ENCODE measurements at regions of chr1 and their contacts with region 1.

Region 1: DNA sequence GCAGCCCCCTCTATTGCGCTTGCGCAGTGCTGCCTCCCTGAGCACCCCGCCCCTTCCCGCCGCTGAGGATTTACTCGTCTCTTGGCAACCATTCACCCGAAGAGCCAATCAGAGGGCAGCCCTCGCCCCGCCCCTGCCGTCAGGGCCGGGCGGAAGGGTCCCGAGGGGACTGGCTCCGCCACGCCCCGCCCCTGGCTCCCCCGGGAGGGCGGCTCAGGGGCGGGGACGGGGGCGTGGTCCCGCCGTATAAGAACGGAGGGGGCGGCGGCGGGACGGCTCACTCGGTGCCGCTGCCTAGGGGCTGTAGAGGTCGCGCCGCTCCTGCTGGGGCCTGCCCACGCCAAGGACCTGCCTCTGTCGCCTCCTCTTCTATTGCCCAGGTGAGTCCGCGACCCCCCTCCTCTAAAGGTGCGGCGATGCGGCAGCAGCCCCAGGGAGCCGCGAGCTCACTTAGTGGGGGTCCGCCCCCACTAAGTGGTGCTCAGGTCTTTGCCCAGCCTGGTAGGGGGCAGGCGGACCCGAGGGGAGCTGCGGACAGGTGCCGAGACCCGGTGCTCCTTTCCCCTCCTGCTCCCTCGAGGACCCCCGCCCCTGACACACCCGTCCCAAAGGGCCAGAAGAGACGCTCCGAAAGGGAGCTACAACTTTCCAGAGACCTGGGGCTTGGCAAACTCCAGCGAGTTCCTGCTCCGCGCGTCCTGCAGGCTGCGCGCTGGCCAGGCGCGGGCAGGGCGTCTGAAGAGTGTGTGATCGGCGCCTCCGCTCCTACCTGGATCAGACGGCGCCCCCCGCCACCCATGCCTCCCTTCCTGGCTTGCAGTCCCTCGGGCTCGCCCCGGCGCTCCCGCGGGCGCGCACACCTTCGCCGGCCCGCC is at the start of gene TENT5C:
- DNase-seq: peak; percentile 98
- H3K4me3 Mint-ChIP-seq: peak within 1 kb of the TSS; percentile 97
- H3K27ac Mint-ChIP-seq: peak within 1 kb of the TSS; percentile 42
- H3K4me1 Mint-ChIP-seq: no peaks in the 10 kb centered on the region
- H3K27me3 Mint-ChIP-seq: peaks cover 36% of the 10 kb centered on the region
- CTCF ChIP-seq: no peak
- total RNA-seq, gene TENT5C: 0.05 TPM in 1 of 2 replicates, not detected in the other

Region 2: GRCh38 chr1:117654493-117655219 is 48.6 kb after region 1 on chr1:
- CTCF ChIA-PET with region 1: interaction called, 4 read pairs
- POLR2A ChIA-PET with region 1: interaction called, 10 read pairs
- intact Hi-C with region 1: no loop called
- DNase-seq: peak; percentile 55
- H3K4me3 Mint-ChIP-seq: no peak overlapping the region
- H3K27ac Mint-ChIP-seq: peak overlapping the region; percentile 74
- H3K4me1 Mint-ChIP-seq: peaks cover 23% of the 10 kb centered on the region
- H3K27me3 Mint-ChIP-seq: no peaks in the 10 kb centered on the region
- CTCF ChIP-seq: no peak

Region 3: GRCh38 chr1:117669572-117669971 is 63.6 kb after region 1 on chr1:
- CTCF ChIA-PET with region 1: no interaction called
- POLR2A ChIA-PET with region 1: no interaction called
- intact Hi-C with region 1: no loop called
- DNase-seq: no peak
- H3K4me3 Mint-ChIP-seq: no peak overlapping the region
- H3K27ac Mint-ChIP-seq: no peak overlapping the region
- H3K4me1 Mint-ChIP-seq: no peaks in the 10 kb centered on the region
- H3K27me3 Mint-ChIP-seq: no peaks in the 10 kb centered on the region
- CTCF ChIP-seq: no peak

Region 4: GRCh38 chr1:117753654-117754054 is 147.6 kb after region 1 on chr1:
- CTCF ChIA-PET with region 1: interaction called, 29 read pairs
- POLR2A ChIA-PET with region 1: interaction called, 4 read pairs
- intact Hi-C with region 1: loop called (anchors 1 kb)
- DNase-seq: peak; percentile 46
- H3K4me3 Mint-ChIP-seq: no peak overlapping the region
- H3K27ac Mint-ChIP-seq: no peak overlapping the region
- H3K4me1 Mint-ChIP-seq: peaks cover 12% of the 10 kb centered on the region
- H3K27me3 Mint-ChIP-seq: no peaks in the 10 kb centered on the region
- CTCF ChIP-seq: no peak

Measured in MCF 10A (cell line).